HepG2 (cell line): ENCODE measurements at regions of chrX and their contacts with region 1.

Region 1: GRCh38 chrX:140050906-140051305 is 85.6 kb upstream of the CXorf66 start:
- DNase-seq: no peak
- ATAC-seq: no peak
- H3K4me3 ChIP-seq: no peak overlapping the region
- H3K27ac ChIP-seq: no peak overlapping the region
- H3K4me1 ChIP-seq: no peaks in the 10 kb centered on the region
- H3K27me3 ChIP-seq: no peaks in the 10 kb centered on the region
- CTCF ChIP-seq: no peak
- EP300 ChIP-seq: no peak
- POLR2A ChIP-seq: no peak
- RAD21 ChIP-seq: no peak

Region 2: DNA sequence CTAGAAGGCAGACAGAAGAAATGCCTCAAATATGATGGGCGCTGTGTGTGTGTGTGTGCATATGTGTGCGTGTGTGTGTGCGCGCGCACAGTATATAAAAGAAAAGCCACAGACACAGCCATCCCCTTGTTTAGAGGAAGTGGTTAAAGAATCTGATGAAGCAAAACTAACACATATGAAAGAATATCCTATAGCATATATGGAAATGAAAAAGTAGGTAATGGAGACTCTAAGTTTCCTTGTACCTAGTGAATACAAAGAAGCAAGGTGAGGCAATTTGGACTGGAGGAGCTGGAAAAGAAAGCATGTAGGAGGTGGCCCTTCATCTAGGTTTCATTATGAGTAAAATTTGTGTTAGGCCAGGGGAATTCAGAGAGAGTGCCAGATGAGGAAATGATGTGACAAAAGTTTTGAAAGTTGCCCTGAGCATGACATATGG is 284.3 kb before region 1 on chrX:
- CTCF ChIA-PET with region 1: no interaction called
- POLR2A ChIA-PET with region 1: no interaction called
- in situ Hi-C with region 1: no loop called
- intact Hi-C with region 1: loop called (anchors 5 kb)
- DNase-seq: no peak
- ATAC-seq: no peak
- H3K4me3 ChIP-seq: no peak overlapping the region
- H3K27ac ChIP-seq: no peak overlapping the region
- H3K4me1 ChIP-seq: no peaks in the 10 kb centered on the region
- H3K27me3 ChIP-seq: no peaks in the 10 kb centered on the region
- CTCF ChIP-seq: no peak
- EP300 ChIP-seq: no peak
- POLR2A ChIP-seq: no peak
- RAD21 ChIP-seq: no peak

Region 3: GRCh38 chrX:140110081-140110650 is 59.3 kb after region 1 on chrX:
- CTCF ChIA-PET with region 1: no interaction called
- POLR2A ChIA-PET with region 1: no interaction called
- in situ Hi-C with region 1: no loop called
- intact Hi-C with region 1: no loop called
- DNase-seq: no peak
- ATAC-seq: no peak
- H3K4me3 ChIP-seq: no peak overlapping the region
- H3K27ac ChIP-seq: no peak overlapping the region
- H3K4me1 ChIP-seq: no peaks in the 10 kb centered on the region
- H3K27me3 ChIP-seq: no peaks in the 10 kb centered on the region
- CTCF ChIP-seq: no peak
- EP300 ChIP-seq: no peak
- POLR2A ChIP-seq: no peak
- RAD21 ChIP-seq: no peak

Region 4: GRCh38 chrX:140346729-140347128 is 295.8 kb after region 1 on chrX:
- CTCF ChIA-PET with region 1: no interaction called
- POLR2A ChIA-PET with region 1: no interaction called
- in situ Hi-C with region 1: no loop called
- intact Hi-C with region 1: no loop called
- DNase-seq: no peak
- ATAC-seq: no peak
- H3K4me3 ChIP-seq: no peak overlapping the region
- H3K27ac ChIP-seq: no peak overlapping the region
- H3K4me1 ChIP-seq: no peaks in the 10 kb centered on the region
- H3K27me3 ChIP-seq: no peaks in the 10 kb centered on the region
- CTCF ChIP-seq: no peak
- EP300 ChIP-seq: no peak
- POLR2A ChIP-seq: no peak
- RAD21 ChIP-seq: no peak